ENCODE measurements at regions of chr19 and their contacts with region 1.

Region 1: GRCh38 chr19:49347846-49348245 is 12.6 kb downstream of the CD37 start:
- DNase-seq: no peak
- H3K4me3 ChIP-seq: no peak overlapping the region
- H3K27ac ChIP-seq: no peak overlapping the region
- H3K4me1 ChIP-seq: no peaks in the 10 kb centered on the region
- H3K27me3 ChIP-seq: no peaks in the 10 kb centered on the region
- CTCF ChIP-seq: no peak

Region 2: GRCh38 chr19:49157445-49158224 is 190.2 kb before region 1 on chr19 and contains the start of gene TRPM4:
- intact Hi-C with region 1: no loop called
- DNase-seq: peak; percentile 91 to 95
- H3K4me3 ChIP-seq: peak within 1 kb of the TSS; percentile 82 to 100
- H3K27ac ChIP-seq: peak within 1 kb of the TSS; percentile 90 to 94
- H3K4me1 ChIP-seq: peaks cover 0 to 44% (median 28%) of the 10 kb centered on the region in 4 donors
- H3K27me3 ChIP-seq: no peaks in the 10 kb centered on the region
- CTCF ChIP-seq: no peak

Region 3: DNA sequence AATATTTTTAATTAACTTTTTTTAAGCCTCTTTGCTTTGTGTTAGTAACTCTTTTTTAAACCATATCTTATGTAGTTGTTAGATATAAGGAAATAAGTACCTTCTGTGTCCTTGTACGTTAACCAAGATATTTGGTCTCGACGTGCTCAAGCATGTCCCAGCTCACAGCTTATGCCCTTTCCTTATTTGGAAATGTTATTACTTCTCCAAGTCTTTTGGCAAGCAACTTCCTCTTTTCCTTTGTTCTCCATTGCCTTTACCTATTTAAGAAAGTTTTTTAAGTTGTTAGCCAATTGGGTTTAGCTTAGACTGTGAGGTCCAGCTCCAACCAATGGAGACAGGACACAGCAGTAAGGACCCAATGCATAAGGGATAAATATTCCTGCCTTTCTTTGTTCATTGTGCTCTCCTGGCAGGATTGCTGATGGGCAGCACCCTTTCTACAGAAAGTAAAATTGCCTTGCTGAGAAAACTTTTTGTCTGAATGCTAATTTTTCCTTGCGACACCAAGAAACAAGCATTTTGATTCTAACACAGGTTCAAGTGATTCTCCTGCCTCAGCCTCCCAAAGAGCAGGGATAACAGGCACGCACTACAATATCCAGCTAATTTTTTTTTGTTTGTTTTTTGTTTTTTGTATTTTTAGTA is 21.0 kb after region 1 on chr19:
- intact Hi-C with region 1: loop called (anchors 1 kb)
- DNase-seq: no peak
- H3K4me3 ChIP-seq: no peak overlapping the region
- H3K27ac ChIP-seq: no peak overlapping the region
- H3K4me1 ChIP-seq: peaks cover 2 to 3% (median 2%) of the 10 kb centered on the region in 4 donors
- H3K27me3 ChIP-seq: peaks cover 0 to 10% of the 10 kb centered on the region in 2 donors
- CTCF ChIP-seq: no peak

Measured in tibial artery (tissue), 4 donors.